ENCODE measurements at regions of chr11 and their contacts with region 1.

Region 1: DNA sequence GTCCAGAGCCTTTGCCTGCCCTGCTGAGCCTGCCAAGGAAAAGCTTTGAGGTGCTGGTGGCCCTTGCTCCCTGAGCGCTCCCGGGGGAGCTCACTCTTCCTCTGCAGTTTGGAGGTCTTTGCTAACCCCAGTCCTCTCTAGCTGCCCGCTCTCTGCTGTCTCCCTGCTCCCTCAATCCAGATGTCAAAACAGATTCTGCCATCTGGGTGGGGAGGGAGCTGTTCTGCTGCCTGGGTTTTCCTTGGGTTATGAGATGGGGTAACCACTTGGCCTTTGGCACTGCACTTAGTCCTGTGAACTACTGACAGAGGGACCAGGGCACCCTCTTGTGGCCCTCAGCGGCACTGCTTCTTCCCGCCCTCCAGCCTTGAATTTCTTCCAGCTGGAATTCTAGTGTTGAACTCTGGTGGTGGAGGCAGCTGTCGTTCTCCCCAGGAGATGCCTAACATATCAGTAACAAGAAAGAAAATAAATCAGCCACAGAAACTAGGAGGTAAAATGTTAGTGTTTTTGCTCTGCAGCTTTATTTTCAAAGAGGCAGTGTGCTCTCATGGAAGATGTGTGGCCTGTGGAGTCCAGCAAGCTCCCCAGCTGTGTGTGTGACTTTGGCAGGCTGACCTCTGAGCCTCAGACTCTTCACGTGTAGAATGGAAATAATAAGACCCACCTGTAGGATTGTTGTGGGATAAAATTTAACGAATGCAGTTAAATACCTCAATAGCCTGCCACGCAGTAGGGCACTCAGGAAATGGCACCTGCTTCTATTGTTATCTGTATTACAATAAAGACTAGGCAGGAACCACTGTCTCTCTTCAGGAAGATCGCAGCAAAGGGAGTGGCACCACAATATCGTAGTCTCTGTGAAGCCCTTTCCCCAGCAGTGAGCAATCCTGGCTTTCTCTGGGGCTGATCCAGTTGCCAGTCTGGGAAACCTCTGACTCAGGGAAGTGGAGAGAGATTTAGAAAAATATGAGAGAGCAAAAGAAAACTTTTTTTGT is 23.4 kb downstream of the ARFGAP2 start:
- DNase-seq: peak; percentile 92

Region 2: GRCh38 chr11:46889689-46890475 is 263.4 kb before region 1 on chr11:
- intact Hi-C with region 1: loop called (anchors 2 kb)
- DNase-seq: peak; percentile 77